Activated CD4-positive, alpha-beta memory T cell treated with anti-CD3 and anti-CD28 coated beads, Interleukin-2, amount 10 ng/mL, durations not matched to agents 7 days and 5 days (primary cell): ENCODE measurements at regions of chr7 and their contacts with region 1.

Region 1: GRCh38 chr7:44490351-44491200 is at the start of gene NUDCD3:
- DNase-seq: peak; percentile 86
- H3K4me3 Mint-ChIP-seq: peak within 1 kb of the TSS; percentile 81
- H3K27ac Mint-ChIP-seq: peak within 1 kb of the TSS; percentile 85
- H3K4me1 Mint-ChIP-seq: peaks cover 43% of the 10 kb centered on the region
- H3K27me3 Mint-ChIP-seq: peaks cover 5% of the 10 kb centered on the region
- total RNA-seq, gene NUDCD3: 91.0 to 97.5 TPM

Region 2: DNA sequence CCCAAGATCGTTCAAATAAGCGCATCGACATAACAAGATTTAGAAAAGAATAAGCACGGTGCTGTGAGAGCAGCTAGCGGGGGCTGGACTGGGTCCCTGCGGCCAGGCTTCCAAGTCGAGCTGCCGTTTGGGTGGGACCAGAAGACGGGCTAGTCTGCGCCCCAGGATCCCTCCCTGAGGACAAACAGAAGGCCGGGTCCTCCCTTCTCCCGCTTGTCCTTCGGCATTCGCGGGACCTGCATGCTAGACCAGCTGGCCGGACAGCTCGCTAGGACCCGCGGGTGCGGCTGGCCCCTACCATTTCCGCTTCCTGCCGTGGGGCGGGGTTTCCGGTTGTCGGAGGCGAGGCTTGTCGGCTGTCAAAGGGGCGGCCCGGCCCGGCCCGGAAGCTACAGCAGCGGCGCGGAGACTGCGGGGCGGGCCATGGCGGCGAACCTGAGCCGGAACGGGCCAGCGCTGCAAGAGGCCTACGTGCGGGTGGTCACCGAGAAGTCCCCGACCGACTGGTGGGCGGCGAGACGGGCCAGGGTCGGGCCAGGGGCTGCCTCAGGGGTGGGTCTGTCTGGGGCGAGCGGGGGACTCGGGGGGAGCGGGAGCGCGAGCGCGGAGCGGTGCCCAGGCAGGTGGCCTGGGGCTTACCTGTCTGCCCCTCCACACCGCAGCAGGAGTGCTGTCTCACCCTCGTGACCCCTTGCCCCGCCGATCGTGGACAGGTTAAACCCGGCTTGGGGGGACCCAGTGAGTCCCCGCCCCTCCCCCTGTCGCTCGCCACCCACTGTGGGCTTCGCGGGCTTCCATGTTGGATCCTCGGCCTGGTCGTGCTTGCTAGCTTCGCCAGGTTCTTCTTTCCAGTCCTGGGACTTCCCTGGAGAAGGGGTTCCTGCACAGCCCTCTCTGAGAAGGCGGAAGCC is 446.0 kb before region 1 on chr7 and contains the start of gene DBNL:
- CTCF ChIA-PET with region 1: no interaction called
- POLR2A ChIA-PET with region 1: interaction called, 14 read pairs
- DNase-seq: peak; percentile 94
- H3K4me3 Mint-ChIP-seq: peak within 1 kb of the TSS; percentile 83
- H3K27ac Mint-ChIP-seq: peak within 1 kb of the TSS; percentile 98
- H3K4me1 Mint-ChIP-seq: peaks cover 53% of the 10 kb centered on the region
- H3K27me3 Mint-ChIP-seq: no peaks in the 10 kb centered on the region
- total RNA-seq, gene DBNL: 175 to 176 TPM

Region 3: DNA sequence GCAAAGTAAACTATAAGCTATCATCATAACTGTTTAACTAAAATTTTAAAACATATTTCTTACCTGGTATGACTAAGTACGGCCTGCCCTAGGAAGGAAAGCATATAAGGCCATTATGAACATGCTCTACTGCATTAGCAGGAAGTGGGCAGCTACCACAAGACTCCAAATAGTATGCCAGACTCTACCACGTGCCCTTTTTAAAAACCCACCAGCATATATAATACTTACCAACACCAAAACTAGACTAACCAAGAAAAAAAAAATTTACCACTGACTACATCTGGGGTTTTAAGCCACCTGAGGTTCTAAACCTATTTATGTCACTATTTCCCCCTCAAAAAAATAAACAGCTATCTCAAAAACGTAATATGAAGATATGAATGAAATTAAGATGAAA is 30.3 kb before region 1 on chr7:
- CTCF ChIA-PET with region 1: interaction called, 8 read pairs
- POLR2A ChIA-PET with region 1: interaction called, 38 read pairs
- DNase-seq: peak; percentile 80
- H3K4me3 Mint-ChIP-seq: peak overlapping the region; percentile 42
- H3K27ac Mint-ChIP-seq: peak overlapping the region; percentile 83
- H3K4me1 Mint-ChIP-seq: peaks cover 68% of the 10 kb centered on the region
- H3K27me3 Mint-ChIP-seq: no peaks in the 10 kb centered on the region

Region 4: DNA sequence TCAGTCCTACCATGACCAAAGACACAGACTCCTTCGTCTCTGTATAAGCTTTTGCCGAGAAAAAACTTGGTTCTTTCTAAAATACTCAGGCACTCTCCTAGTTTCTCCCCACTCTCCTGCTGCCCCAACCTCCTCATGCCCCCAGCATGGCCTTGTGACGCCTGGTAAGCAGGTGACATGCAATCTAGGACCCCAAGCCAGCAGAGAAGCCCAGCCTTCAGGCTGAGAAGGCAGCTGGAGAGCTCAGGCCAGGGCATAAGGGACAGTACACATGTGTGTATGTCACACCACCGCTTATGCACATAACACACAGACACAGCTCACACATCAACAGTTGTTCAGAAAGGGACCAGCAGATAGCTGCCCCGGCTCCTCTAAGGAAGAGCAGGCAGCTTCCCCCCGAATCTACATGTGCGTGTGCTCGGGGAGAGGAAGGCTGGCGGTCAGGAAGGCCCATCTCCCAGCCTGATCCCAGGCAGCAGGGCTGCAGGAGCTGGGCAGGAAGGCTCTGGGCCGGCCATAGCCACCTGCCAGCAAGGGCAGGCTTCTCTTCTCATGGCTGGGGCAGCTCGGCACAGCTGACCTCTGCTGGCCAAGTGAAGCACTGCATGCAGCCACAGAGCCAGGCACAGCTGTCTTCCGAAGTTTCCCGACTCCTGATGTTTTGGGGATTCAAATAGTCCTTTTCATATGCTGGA is 74.7 kb after region 1 on chr7:
- CTCF ChIA-PET with region 1: interaction called, 12 read pairs
- POLR2A ChIA-PET with region 1: interaction called, 18 read pairs
- DNase-seq: peak; percentile 73
- H3K4me3 Mint-ChIP-seq: no peak overlapping the region
- H3K27ac Mint-ChIP-seq: no peak overlapping the region
- H3K4me1 Mint-ChIP-seq: peaks cover 2% of the 10 kb centered on the region
- H3K27me3 Mint-ChIP-seq: no peaks in the 10 kb centered on the region

Region 5: GRCh38 chr7:44581879-44582603 is 91.5 kb after region 1 on chr7 and contains the start of gene TMED4:
- CTCF ChIA-PET with region 1: interaction called, 5 read pairs
- POLR2A ChIA-PET with region 1: interaction called, 13 read pairs
- DNase-seq: peak; percentile 100
- H3K4me3 Mint-ChIP-seq: peak within 1 kb of the TSS; percentile 92
- H3K27ac Mint-ChIP-seq: peak within 1 kb of the TSS; percentile 85
- H3K4me1 Mint-ChIP-seq: peaks cover 42% of the 10 kb centered on the region
- H3K27me3 Mint-ChIP-seq: no peaks in the 10 kb centered on the region
- total RNA-seq, gene TMED4: 76.0 to 81.8 TPM